Tibial artery (tissue), 4 donors: ENCODE measurements at regions of chr2 and their contacts with region 1.

Region 1: DNA sequence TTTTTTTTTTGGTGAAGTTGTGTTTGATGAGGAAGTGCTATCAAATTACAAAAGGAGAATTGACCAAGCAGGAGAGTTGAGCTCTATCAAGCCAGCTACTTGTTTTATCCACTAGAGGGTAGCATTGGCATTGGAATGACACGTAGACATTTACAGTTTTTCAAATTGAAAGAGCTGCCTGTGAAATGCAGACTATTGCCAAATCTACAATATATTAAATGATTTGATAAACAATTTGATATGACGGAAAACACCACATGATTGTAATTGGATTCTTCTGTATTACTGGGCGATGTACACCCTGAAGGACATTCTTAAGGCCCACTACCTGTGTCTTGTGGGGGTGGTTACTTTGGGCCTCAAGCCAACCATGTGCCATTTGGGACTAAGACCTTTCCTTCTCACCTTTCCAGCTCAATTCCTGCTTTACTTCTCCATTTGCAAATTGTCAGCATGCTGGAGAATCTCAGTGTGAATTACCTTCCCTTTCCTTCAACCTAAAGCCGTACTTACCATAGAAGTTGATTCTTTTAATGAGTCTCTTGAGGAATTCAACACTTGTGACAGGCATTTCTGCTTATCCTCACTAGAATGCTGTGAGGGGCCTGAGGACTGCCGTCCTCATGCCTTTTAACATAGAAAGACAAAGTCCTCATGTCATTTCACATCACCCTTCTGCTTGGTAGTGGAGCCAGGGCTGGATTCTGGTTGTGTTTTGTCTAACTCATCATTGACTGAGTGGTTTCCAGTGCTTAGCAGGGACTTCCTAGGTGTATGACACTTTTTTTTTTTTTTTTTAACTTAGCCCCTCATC is 134.8 kb upstream of the THUMPD2 start:
- DNase-seq: no peak
- H3K4me3 ChIP-seq: no peak overlapping the region
- H3K27ac ChIP-seq: no peak overlapping the region
- H3K4me1 ChIP-seq: peaks cover 0 to 4% (median 2%) of the 10 kb centered on the region in 4 donors
- H3K27me3 ChIP-seq: peaks cover 0 to 2% of the 10 kb centered on the region in 2 donors
- CTCF ChIP-seq: peak; percentile 76 to 83

Region 2: DNA sequence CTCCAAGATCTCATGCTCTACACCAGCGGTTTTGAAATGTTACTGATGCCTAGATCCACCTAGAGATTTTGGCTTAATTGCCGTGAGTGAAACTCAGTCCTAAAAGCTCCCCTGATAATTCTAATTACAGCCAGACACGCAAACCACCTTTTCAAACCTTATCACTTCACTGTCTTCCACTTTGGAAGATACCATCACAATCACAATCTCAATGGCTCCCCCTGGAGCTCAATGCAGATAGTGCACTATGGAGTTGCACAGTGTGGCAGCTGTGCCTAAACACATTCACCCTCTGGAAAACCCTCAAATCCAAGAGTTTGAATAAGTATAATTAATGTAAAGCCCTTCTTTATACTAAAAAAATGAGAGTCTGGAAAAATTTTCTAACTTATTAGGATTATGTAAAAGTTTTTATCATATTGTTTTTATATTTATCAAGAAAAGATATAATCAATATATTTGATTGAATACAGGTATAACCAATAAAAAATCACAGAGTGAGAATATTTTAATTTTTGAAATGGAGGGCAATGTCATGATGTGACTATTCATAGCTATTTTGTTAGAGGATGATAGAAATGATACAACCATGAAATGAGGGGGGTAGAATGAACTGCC is 640.9 kb after region 1 on chr2:
- intact Hi-C with region 1: loop called (anchors 5 kb)
- DNase-seq: peak; percentile 71 to 84
- H3K4me3 ChIP-seq: no peak overlapping the region
- H3K27ac ChIP-seq: no peak overlapping the region
- H3K4me1 ChIP-seq: no peaks in the 10 kb centered on the region
- H3K27me3 ChIP-seq: no peaks in the 10 kb centered on the region
- CTCF ChIP-seq: peak; percentile 76 to 83